ENCODE measurements at regions of chr6 and their contacts with region 1.

Region 1: DNA sequence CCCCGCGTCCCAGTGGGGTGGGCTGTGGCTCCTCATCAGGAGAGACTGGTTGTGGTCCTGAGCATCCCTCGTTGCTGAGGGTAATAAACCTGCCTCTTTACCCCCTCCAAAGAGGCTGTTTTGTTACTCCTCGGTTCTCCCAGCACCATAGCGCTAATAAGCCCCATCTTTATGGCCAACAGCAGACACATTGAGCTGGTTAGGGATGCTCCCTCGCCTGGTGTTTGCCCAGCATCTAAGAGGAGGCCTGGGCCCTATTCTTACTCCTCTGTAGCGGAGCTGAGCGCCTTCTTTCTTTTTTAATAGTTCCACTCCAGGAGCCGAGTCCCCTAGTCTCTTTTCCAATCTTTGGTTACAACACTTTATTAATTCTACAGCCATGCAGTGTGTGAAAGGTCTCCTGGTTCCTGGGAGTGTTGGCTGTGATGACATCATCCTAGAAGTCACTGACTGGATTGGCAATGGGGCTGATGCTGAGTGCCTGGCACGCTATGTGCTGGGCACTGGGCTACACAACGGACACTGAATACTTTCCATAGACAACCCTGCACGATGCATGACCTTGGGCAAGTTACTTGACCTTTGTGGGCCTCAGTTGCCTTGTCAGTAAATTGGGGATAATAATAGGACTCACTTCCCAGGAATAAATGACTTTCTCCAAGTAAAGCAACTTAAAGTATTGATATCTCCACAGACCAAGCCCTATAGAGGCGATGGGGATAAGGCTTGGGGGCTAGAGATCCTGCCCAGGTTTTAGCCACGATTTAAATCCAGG is 50.7 kb upstream of the CCDC167 start:
- DNase-seq: no peak
- ATAC-seq: no peak

Region 2: GRCh38 chr6:37499433-37500293 is 50.7 kb before region 1 on chr6 and contains the start of gene CCDC167:
- intact Hi-C with region 1: loop called (anchors 10 kb)
- DNase-seq: peak; percentile 96
- ATAC-seq: peak; percentile 100
- total RNA-seq, gene CCDC167: 26.6 TPM

Region 3: DNA sequence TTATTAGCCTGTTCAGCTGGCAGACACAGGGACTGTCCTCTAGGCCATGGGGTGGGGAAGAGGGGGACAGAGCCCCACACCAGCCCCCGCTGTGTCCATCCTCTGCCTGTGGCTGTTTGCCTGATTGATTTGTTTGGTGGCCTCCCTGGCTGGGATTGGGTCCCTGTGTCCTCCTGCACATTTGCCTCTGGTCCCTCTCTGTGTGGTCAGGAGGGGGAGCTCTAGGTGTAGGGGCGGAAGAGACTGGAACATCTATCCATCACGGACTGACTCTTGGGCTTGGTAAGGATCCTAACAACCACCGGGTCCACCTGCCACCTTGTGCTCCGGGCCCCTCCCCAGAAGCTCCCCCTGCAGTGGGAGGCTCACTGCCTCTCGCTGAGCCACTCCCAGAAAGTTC is 12.3 kb before region 1 on chr6:
- intact Hi-C with region 1: no loop called
- DNase-seq: no peak
- ATAC-seq: no peak

Region 4: DNA sequence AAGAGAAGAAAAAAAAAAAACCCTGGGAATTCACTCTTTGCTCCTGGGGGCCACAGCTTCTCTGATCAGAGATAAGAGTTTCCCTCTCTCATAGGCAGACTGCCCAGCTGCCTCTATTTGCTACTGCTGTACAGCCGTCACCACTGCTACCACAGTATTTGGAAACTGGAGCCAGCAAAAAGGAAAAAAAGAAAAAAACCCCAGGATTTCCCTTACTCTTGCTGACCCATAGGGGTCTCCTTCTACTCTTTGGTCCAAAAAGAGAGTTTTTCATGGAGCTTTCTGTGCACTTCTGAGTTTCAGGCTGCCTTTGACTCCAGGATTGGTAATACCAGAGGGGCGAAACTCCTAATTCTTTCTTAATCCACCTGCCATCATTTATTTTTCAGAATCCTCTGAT is 57.6 kb after region 1 on chr6:
- intact Hi-C with region 1: no loop called
- DNase-seq: no peak
- ATAC-seq: no peak